Ascending aorta (tissue), 2 donors: ENCODE measurements at regions of chr3 and their contacts with region 1.

Region 1: GRCh38 chr3:100993309-100993708 is at the start of gene ABI3BP:
- DNase-seq: peak; percentile 53 to 90
- H3K4me3 ChIP-seq: peak within 1 kb of the TSS; percentile 47 to 59
- H3K27ac ChIP-seq: peak within 1 kb of the TSS; percentile 65 to 71
- H3K4me1 ChIP-seq: peaks cover 0 to 13% of the 10 kb centered on the region in 2 donors
- H3K27me3 ChIP-seq: no peaks in the 10 kb centered on the region
- CTCF ChIP-seq: no peak
- total RNA-seq, gene ABI3BP: 54.2 TPM

Region 2: GRCh38 chr3:100954990-100955389 is 38.3 kb before region 1 on chr3:
- intact Hi-C with region 1: loop called (anchors 5 kb)
- DNase-seq: peak in 1 of 2 donors; percentile 84
- H3K4me3 ChIP-seq: no peak overlapping the region
- H3K27ac ChIP-seq: peak overlapping the region; percentile 17 to 46
- H3K4me1 ChIP-seq: peaks cover 0 to 3% of the 10 kb centered on the region in 2 donors
- H3K27me3 ChIP-seq: no peaks in the 10 kb centered on the region
- CTCF ChIP-seq: no peak

Region 3: DNA sequence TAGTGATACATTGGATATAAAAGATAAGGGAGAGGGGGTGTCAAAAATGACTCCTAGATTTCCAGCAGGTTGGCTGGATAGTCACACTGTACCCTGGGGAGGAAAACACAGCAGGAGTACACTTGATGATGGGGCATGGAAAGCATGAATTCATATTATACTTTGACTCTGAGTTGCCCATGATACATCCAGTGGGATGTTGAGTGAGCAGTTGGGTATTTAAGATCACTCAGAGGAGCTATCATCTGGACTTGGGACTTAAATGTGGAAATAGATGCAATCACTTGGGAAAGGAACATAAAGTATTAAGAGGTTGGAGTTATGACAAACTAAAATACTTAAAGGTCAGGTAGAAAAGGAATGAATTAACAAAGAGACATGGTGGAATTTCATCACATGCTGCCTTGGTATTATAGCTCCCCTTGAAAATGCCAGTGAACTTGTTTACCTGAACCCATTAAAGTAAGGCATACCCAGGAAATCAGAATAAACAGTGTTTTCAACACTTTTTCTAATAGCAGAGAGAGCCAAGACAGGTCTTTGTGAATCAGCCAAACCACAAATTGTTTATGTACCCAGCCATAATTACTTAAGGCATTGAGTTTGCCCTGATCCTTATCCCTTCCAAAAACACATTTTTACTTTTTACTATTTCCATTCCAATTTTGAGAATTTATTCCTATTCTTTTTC is 49.8 kb after region 1 on chr3:
- intact Hi-C with region 1: no loop called
- DNase-seq: no peak
- H3K4me3 ChIP-seq: no peak overlapping the region
- H3K27ac ChIP-seq: no peak overlapping the region
- H3K4me1 ChIP-seq: peaks cover 3 to 7% of the 10 kb centered on the region in 2 donors
- H3K27me3 ChIP-seq: no peaks in the 10 kb centered on the region
- CTCF ChIP-seq: no peak

Region 4: GRCh38 chr3:101069901-101070798 is 76.8 kb after region 1 on chr3:
- intact Hi-C with region 1: loop called (anchors 5 kb)
- DNase-seq: no peak
- H3K4me3 ChIP-seq: no peak overlapping the region
- H3K27ac ChIP-seq: peak overlapping the region; percentile 13 to 35
- H3K4me1 ChIP-seq: peaks cover 0 to 5% of the 10 kb centered on the region in 2 donors
- H3K27me3 ChIP-seq: no peaks in the 10 kb centered on the region
- CTCF ChIP-seq: peak in 2 of 3 experiments; percentile 40 to 41

Region 5: GRCh38 chr3:101216710-101217465 is 223.6 kb after region 1 on chr3:
- intact Hi-C with region 1: no loop called
- DNase-seq: peak; percentile 33 to 85
- H3K4me3 ChIP-seq: no peak overlapping the region
- H3K27ac ChIP-seq: peak overlapping the region; percentile 5 to 43
- H3K4me1 ChIP-seq: peaks cover 0 to 3% of the 10 kb centered on the region in 2 donors
- H3K27me3 ChIP-seq: no peaks in the 10 kb centered on the region
- CTCF ChIP-seq: no peak

Region 6: DNA sequence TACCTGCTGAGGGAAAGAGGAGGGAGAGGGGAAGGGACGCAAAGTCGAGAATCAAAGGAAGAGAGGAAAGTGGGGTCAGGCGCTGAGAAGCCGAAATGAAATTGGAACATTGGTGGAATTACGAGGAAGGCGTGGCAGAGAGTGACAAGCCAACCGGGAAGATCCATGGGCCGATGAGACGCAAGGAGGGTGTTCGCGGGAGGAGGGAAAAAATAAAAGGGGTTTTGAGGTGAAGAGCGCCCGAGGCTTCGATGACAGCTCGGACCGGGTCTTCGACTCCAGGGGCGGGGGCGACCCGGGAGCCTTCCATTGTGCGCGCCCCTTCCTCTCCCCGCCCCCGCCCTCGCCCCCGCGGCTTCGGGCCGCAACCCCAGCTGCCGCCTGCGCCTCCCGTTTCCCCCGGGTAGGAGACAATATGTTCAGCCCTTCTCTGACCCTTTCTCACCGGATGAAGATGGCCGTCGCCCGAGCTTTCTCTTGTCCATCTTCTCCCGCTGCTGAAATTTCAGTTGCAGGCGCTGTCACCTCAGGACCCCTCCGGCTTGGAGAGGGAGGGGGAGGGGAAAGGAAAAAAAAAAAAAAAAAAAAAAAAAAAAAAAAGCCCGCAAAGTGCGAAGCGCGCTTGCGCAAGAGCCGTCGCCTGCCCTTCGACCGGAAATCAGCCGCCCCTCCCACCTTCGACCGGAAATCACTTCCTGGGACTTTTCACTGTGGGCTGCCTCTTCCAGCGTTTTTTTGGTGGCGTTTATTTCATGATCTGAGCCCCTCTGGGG is 519.5 kb after region 1 on chr3 and contains the start of gene SENP7:
- intact Hi-C with region 1: loop called (anchors 5 kb)
- DNase-seq: peak; percentile 16 to 91
- H3K4me3 ChIP-seq: peak within 1 kb of the TSS; percentile 91 to 96
- H3K27ac ChIP-seq: peak within 1 kb of the TSS; percentile 91 to 92
- H3K4me1 ChIP-seq: no peaks in the 10 kb centered on the region
- H3K27me3 ChIP-seq: no peaks in the 10 kb centered on the region
- CTCF ChIP-seq: no peak
- total RNA-seq, gene SENP7: 6.1 TPM